Gastrocnemius medialis (tissue), 4 donors: ENCODE measurements at regions of chr13 and their contacts with region 1.

Region 1: DNA sequence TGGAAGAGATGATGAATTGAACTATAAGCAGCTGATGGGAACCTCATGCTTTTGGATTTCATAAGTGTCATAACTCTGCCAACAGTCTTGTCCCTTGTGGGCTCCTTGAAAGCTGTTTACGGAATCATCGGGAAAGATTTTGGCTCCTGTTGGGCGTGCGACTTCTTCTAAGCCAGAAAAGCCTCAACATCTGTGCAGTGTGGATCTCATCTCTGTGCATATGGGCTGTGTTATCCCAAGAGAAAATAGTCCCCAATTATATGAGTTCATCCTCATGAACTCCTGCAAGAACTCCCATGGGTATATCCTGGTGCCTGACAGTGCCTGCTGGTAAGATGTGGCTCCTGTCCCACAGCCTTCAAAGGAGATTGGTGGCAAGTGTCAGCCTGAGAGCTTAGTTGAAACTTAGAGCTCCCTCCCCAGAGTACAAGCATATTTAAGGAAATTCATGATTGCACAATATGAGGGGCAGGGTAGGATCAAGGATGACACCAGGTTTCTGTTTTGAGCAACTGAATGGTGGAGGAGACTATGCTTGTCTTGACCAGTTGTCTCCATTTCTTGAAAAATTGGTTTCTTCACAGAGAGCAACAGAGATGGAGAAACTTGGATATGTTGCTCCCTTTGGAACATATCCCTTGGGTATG is 243.5 kb downstream of the ITGBL1 start:
- DNase-seq: peak; percentile 25 to 59
- ATAC-seq: peak; percentile 53 to 77
- H3K4me3 ChIP-seq: no peak overlapping the region
- H3K27ac ChIP-seq: peak overlapping the region in 3 of 4 donors; percentile 46 to 57 (median 50)
- H3K4me1 ChIP-seq: no peaks in the 10 kb centered on the region
- H3K27me3 ChIP-seq: no peaks in the 10 kb centered on the region
- CTCF ChIP-seq: no peak
- POLR2A ChIP-seq: no peak

Region 2: GRCh38 chr13:101520672-101521071 is 175.3 kb before region 1 on chr13:
- in situ Hi-C with region 1: no loop called
- intact Hi-C with region 1: loop called (anchors 10 kb)
- DNase-seq: no peak
- ATAC-seq: no peak
- H3K4me3 ChIP-seq: no peak overlapping the region
- H3K27ac ChIP-seq: no peak overlapping the region
- H3K4me1 ChIP-seq: no peaks in the 10 kb centered on the region
- H3K27me3 ChIP-seq: no peaks in the 10 kb centered on the region
- CTCF ChIP-seq: no peak
- POLR2A ChIP-seq: no peak

Region 3: DNA sequence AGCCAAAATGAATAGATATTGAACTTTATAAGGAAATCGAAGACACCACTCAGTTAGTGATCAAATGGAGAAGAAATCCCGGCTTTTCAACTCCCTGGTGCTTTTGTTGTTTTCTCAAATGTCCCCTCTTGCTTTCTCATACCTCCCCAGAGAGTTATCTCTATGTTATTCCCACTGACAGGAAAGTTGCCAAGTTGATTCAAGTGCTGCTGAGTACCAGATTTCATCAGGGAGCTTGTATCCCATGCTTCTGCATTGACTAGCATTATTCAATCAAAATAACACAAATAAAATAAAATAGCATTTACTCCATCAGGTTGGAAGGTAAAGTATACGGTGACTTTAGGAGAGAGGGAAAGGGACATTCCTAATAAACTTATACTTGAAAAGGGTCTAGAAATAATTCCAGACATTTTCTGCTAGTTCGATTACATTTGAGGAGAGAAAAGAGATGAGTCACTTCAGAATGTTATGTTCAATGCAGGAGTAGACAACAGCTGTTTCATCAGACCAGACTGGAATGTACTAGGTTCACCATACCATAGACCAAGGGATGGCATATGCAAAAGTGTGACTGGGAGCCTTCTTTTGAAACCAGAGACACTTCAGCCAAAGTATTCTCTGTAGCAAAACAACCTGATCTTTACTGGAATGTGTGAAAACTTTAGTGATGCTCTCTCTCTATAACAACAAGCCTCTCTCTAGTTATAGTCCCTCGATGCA is 308.0 kb after region 1 on chr13:
- in situ Hi-C with region 1: no loop called
- intact Hi-C with region 1: no loop called
- DNase-seq: no peak
- ATAC-seq: no peak
- H3K4me3 ChIP-seq: no peak overlapping the region
- H3K27ac ChIP-seq: no peak overlapping the region
- H3K4me1 ChIP-seq: no peaks in the 10 kb centered on the region
- H3K27me3 ChIP-seq: no peaks in the 10 kb centered on the region
- CTCF ChIP-seq: no peak
- POLR2A ChIP-seq: no peak